Adrenal gland (tissue), 19 donors: ENCODE measurements at regions of chr18 and their contacts with region 1.

Region 1: GRCh38 chr18:12934454-12935071 is 13.2 kb upstream of the SEH1L start:
- DNase-seq: peak; percentile 77 to 93 (median 86)
- H3K4me3 ChIP-seq: no peak overlapping the region
- H3K27ac ChIP-seq: no peak overlapping the region
- H3K4me1 ChIP-seq: no peaks in the 10 kb centered on the region
- H3K27me3 ChIP-seq: no peaks in the 10 kb centered on the region
- CTCF ChIP-seq: peak; percentile 76 to 98 (median 96)
- POLR2A ChIP-seq: no peak

Region 2: GRCh38 chr18:12726774-12727550 is 207.6 kb before region 1 on chr18:
- intact Hi-C with region 1: loop called (anchors 5 kb)
- DNase-seq: peak in 6 of 7 donors; percentile 46 to 79 (median 68)
- H3K4me3 ChIP-seq: no peak overlapping the region
- H3K27ac ChIP-seq: no peak overlapping the region
- H3K4me1 ChIP-seq: no peaks in the 10 kb centered on the region
- H3K27me3 ChIP-seq: no peaks in the 10 kb centered on the region
- CTCF ChIP-seq: peak; percentile 86 to 92 (median 89)
- POLR2A ChIP-seq: no peak

Region 3: DNA sequence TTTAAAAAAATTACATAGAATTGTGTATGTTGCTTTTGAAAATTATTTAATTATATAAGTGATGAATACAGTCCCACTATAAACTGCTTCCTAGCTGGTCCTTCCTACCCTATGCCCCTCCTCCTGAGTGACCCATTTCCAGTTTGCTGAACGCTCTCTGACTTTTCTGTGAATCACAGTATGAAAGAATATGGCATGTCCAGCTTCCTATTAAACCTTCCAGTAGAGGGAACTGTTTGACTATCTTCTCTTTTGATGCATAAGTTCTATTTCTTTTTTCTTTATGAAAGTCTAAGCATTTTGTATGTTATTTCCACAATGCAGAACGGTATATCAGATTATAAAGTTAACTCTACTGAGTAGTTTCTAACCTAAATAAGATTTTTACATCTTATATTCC is 190.5 kb before region 1 on chr18:
- intact Hi-C with region 1: loop called in 1 of 2 experiments (anchors 5 kb)
- DNase-seq: peak in 2 of 7 donors; percentile 17 to 29
- H3K4me3 ChIP-seq: no peak overlapping the region
- H3K27ac ChIP-seq: no peak overlapping the region
- H3K4me1 ChIP-seq: no peaks in the 10 kb centered on the region
- H3K27me3 ChIP-seq: no peaks in the 10 kb centered on the region
- CTCF ChIP-seq: peak; percentile 30 to 80 (median 64)
- POLR2A ChIP-seq: no peak

Region 4: DNA sequence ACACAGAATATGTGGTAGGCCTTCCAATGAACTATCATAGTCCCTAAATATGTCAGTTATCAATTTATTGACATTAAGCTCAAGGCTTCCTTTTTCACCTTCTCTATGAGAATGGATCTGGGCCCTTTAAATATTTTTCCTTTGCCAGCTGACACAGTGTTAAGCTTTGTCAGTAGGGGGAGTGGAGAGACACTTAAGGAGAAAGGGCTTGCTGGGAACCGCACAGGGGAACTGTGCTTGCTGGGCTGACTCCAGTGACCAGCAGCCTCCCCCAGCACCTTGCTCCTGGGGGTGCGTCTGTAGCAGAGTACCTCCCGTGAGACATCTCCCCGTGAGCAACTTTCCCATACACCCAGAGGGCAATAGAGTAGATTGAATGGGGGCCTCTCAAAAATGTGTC is 44.1 kb before region 1 on chr18:
- intact Hi-C with region 1: loop called in 1 of 2 experiments (anchors 5 kb)
- DNase-seq: no peak
- H3K4me3 ChIP-seq: no peak overlapping the region
- H3K27ac ChIP-seq: no peak overlapping the region
- H3K4me1 ChIP-seq: peaks cover 0 to 5% of the 10 kb centered on the region in 2 donors
- H3K27me3 ChIP-seq: no peaks in the 10 kb centered on the region
- CTCF ChIP-seq: no peak
- POLR2A ChIP-seq: no peak